Right ventricle myocardium inferior (tissue), 1 donor: ENCODE measurements at regions of chr2 and their contacts with region 1.

Region 1: DNA sequence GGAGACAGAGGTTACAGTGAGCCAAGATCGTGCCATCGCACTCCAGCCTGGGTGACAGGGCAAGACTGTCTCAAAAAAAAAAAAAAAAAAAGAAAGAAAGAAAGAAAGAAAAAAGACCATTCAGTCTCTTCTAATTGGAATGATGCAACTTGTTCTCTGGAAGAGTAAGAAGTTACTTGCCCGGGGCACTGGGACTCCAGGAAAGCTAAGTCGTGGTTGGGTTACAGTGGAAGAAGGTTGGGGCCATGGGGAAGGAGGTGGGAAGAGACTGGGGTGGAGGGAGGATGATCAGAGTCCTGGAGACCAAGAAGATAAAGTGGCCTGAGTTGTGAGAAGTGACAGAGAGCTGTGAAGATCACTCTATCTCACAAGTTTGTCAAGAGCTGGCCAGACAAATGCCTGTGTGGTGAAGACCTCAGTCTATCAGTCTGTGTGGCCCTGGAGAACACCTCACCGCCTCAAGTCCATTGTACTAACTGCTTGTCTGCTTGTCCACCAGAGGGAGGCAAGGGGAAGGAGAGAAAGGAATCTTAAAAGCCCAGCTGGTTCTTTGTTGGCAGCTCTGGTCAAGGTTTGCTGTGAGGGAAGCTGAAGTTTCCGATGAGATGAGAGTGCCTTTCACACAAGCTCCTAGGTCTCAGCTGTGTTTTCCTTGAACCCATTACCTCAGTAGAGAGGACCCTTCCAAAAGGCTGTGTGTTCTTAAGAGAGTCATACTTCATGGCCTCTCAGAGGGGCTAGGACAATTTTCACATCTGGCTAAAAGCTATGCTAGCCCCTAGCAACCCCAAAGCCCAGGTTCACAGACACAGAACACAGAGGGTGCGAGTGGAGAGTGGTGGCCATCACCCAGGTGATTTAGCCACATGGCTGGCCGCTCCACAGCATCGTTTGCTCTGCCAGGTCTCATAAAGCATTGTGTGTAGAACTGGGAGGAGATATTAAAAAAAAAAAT is 72.0 kb upstream of the TMEM178A start:
- DNase-seq: no peak
- ATAC-seq: peak; percentile 73

Region 2: GRCh38 chr2:39325966-39326365 is 267.8 kb before region 1 on chr2:
- intact Hi-C with region 1: no loop called
- DNase-seq: no peak
- ATAC-seq: no peak

Region 3: GRCh38 chr2:39665811-39666490 is 72.2 kb after region 1 on chr2 and contains the start of gene TMEM178A:
- intact Hi-C with region 1: loop called (anchors 5 kb)
- DNase-seq: no peak
- ATAC-seq: peak; percentile 44
- total RNA-seq, gene TMEM178A: 3.0 TPM

Region 4: GRCh38 chr2:39696838-39697237 is 103.1 kb after region 1 on chr2:
- intact Hi-C with region 1: loop called (anchors 2 kb)
- DNase-seq: no peak
- ATAC-seq: peak; percentile 54